GM18951 (cell line): ENCODE measurements at regions of chr3 and their contacts with region 1.

Region 1: DNA sequence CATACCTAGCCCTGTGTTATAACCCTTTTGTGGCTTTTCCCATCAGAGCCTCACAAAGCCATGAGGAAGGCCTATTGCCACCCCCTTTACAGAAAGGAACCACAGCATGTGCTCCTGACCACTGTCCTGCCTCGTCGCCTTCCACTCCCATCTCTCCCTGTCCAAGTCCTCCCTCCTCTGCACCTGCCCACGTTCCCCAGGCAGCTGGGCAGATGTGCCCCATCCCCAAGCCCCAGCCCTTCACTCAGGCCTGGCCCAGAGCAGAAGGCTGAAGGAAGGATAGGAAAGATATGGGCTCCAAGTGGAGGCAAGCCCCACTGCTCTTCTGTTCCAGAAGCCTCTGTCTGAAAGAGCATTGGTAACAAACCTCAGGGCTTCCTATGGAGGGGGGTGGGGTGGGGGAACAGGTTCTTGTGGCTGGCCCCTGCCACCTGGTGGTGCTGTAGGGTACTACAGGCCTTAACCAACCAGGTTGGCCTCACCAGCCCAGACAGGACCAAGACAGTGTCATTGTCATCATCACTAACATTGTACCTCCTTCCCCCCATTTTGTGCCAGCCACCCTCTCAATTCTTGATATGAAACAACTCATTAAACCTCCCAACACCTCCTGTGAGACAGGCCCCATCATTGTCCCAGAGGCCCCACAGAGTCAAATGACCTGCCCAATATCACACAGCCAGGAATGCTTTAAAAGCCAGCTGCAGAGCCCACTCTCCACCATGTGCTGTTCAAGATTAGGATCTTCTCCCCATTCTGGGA is 10.0 kb downstream of the POC1A start:
- POLR2A ChIP-seq: no peak

Region 2: GRCh38 chr3:52001443-52001974 is 142.7 kb before region 1 on chr3:
- in situ Hi-C with region 1: loop called (anchors 5 kb)
- POLR2A ChIP-seq: no peak